ENCODE measurements at regions of chr18 and their contacts with region 1.

Region 1: DNA sequence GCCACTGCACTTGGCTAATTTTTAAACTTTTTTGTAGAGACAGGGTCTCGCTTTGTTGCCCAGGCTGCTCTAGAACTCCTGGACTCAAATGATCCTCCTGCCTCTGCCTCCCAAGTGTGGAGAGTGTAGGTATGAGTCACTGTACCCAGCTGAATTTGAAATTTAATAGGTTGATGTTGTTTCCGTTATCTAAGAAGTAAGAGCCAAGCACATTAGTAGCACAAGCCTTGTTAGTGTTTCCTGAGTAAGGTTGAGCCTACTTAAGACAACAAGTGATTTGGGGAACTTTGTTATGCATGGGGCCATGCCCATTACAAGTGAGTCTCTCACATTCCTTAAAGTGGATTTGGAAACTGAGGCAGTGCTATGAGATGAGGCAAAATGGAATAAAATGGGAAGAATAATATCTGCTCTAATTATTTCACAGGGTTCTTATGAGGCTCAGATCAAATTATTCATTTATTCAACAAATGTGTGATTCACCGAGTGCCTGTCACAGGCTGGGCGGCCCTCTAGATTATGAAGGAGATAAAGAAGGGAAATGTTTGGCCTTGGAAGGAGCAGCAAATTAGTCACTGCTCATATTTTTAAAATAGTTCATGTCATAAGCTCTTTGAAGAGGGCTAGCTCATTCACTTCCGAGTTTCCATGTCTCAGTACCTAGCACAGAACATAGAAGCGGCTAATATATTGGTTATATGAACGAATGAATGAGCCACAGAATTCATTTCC is 217.2 kb downstream of the LDLRAD4 start:
- DNase-seq: peak; percentile 91
- H3K4me3 ChIP-seq: no peak overlapping the region
- H3K27ac ChIP-seq: peak overlapping the region; percentile 90
- H3K4me1 ChIP-seq: peaks cover 35% of the 10 kb centered on the region
- H3K27me3 ChIP-seq: no peaks in the 10 kb centered on the region
- CTCF ChIP-seq: no peak
- POLR2A ChIP-seq: no peak

Region 2: DNA sequence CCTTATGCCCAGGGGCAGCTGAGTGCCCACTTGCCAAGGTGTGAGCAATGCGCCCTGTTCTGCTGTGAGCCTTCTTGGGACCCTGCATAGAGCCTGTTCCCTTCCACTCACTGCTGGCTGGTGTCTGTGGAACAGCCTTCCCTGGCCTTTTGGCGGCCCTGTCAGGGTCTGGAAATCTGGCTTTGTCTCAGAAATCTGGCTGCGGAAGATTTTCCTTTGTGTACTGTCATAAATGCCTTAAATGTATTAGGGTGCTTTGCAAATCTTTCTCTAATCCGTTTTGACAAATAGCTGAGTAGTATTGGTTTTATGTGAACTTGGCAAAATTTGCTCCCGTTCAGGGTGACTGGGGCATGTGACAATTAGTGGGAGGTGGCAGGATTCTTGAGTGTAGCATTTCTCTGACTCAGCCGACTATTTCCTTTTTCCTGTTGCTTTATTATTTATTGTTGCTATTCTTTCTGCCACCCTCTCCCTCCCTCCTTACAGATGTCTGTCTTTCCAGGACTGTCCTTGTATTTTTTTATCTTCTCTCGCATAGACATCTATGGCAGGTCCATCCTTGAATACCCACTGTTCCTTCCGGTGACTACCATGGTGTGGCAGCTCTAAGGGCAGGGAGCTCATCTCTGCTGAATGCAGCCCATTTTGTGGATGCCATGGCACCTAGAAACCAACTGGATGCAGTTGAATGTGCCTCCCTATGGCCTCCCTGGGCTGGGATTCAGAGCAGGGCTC is 175.4 kb before region 1 on chr18:
- CTCF ChIA-PET with region 1: no interaction called
- POLR2A ChIA-PET with region 1: no interaction called
- dilution Hi-C with region 1: no loop called
- intact Hi-C with region 1: loop called (anchors 2 kb)
- DNase-seq: peak; percentile 75
- H3K4me3 ChIP-seq: no peak overlapping the region
- H3K27ac ChIP-seq: peak overlapping the region; percentile 38
- H3K4me1 ChIP-seq: peaks cover 22% of the 10 kb centered on the region
- H3K27me3 ChIP-seq: peaks cover 0 to 5% of the 10 kb centered on the region in 2 experiments
- CTCF ChIP-seq: no peak
- POLR2A ChIP-seq: no peak

Region 3: DNA sequence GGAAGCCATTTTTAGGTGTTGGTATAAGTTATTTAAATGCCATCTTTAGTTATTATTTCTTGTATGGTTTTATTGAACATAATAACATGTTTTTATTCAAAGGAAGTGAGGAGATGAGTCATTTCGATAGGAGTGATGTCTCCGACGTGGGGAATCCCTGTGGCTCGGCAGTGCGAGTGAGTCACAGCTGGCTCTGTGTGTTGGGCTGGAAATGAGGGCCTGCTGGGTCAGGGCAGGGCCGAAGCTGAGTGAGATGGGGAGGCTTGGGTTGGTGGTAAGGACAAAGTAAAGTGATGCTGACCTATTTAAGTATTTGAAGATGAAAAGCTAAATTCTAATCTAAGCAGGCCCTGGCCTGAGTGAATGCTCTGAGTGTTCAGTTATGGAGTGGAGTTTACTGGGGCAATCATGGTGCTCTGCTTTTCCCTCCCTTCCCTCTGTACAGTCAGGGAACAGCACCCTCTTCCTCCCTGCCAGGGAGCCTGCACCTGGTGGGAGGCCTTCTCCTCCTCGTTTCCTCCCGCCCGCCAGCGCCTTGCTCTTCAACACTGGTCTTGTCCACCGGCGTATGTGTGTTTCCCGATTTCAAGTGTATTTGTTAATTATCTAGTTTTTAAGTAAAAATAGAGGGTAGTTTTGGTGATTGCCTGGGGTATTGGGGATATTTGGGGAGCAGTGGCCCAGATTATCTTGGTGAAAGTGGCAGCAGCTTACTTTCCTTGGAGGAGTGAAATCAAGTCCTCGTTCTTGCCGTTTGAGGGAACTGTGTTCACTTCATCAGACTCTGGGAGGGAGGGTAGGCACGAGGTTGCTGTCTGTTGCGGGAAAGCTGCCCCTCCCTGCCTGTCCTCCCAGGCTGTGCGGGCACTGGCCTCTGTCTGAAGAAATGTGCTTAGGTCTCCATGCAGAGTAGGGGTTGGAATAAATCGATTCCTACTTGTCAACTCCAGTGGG is 60.2 kb before region 1 on chr18:
- CTCF ChIA-PET with region 1: interaction called, 6 read pairs
- POLR2A ChIA-PET with region 1: no interaction called
- dilution Hi-C with region 1: no loop called
- intact Hi-C with region 1: loop called (anchors 2 kb)
- DNase-seq: peak; percentile 97
- H3K4me3 ChIP-seq: peak overlapping the region in 1 of 3 experiments; percentile 20
- H3K27ac ChIP-seq: peak overlapping the region; percentile 90
- H3K4me1 ChIP-seq: peaks cover 23% of the 10 kb centered on the region
- H3K27me3 ChIP-seq: no peaks in the 10 kb centered on the region
- CTCF ChIP-seq: no peak
- POLR2A ChIP-seq: no peak

Region 4: DNA sequence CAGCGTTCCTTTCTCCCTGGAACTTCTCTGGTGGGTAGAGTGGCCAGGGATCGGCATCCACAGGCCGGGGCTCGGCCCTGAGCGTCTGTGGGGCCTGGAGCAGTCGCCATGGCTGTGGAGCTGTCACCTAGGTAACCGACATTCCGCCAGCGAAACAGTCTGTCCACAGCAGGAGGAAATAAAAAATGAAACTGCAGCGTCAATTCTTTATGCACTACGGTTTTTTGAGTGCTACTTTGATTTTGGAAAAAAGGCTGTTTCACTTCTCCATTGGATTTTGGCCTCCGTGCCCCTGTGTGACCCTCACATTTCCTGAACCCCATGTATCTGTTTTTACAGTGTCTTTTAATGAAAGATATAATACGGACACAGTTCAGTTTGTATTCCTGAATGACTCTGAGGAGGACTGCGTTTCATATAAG is 53.8 kb before region 1 on chr18:
- CTCF ChIA-PET with region 1: interaction called, 3 read pairs
- POLR2A ChIA-PET with region 1: no interaction called
- dilution Hi-C with region 1: no loop called
- intact Hi-C with region 1: loop called (anchors 1 kb)
- DNase-seq: peak; percentile 71
- H3K4me3 ChIP-seq: peak overlapping the region in 1 of 3 experiments; percentile 49
- H3K27ac ChIP-seq: peak overlapping the region; percentile 94
- H3K4me1 ChIP-seq: peaks cover 31% of the 10 kb centered on the region
- H3K27me3 ChIP-seq: no peaks in the 10 kb centered on the region
- CTCF ChIP-seq: no peak
- POLR2A ChIP-seq: no peak

Region 5: DNA sequence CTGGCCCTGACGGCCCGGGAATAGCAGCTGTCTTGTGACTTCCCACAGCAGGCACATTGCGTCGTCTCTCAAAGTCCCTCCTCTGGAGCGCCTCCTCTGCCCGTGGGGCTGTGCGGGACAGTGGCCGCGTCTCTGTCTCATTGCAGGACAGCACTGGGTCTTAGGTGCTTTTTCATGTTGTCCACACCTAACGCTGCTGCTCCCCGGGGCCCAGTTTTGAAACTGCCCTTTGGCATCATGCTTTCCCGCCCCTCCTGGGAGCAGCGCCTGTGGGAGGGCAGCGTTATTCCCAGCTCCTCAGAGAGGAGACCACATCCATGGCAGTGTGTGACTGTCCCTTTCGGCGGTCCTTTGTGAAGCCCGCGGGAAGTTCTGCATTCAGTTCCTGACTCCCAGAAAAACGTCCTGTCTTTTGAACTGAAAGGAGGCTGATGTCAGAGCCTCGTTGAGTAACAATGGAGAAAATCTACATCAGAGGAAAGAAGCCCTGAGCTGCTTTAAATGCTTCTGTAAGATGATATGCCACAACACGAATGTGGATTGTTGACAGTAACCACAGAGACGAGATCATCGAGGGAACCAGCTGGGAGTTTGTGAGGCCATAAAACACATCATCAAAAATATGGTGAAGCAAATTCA is 64.6 kb after region 1 on chr18:
- CTCF ChIA-PET with region 1: interaction called, 5 read pairs
- POLR2A ChIA-PET with region 1: no interaction called
- dilution Hi-C with region 1: no loop called
- intact Hi-C with region 1: loop called (anchors 2 kb)
- DNase-seq: peak; percentile 83
- H3K4me3 ChIP-seq: no peak overlapping the region
- H3K27ac ChIP-seq: peak overlapping the region; percentile 57
- H3K4me1 ChIP-seq: peaks cover 29% of the 10 kb centered on the region
- H3K27me3 ChIP-seq: peaks cover 0 to 2% of the 10 kb centered on the region in 2 experiments
- CTCF ChIP-seq: no peak
- POLR2A ChIP-seq: no peak

Region 6: GRCh38 chr18:13611601-13612195 is 175.9 kb after region 1 on chr18:
- CTCF ChIA-PET with region 1: no interaction called
- POLR2A ChIA-PET with region 1: no interaction called
- dilution Hi-C with region 1: no loop called
- intact Hi-C with region 1: loop called (anchors 5 kb)
- DNase-seq: peak; percentile 24
- H3K4me3 ChIP-seq: peak overlapping the region in 1 of 3 experiments; percentile 27
- H3K27ac ChIP-seq: no peak overlapping the region
- H3K4me1 ChIP-seq: peaks cover 13% of the 10 kb centered on the region
- H3K27me3 ChIP-seq: peaks cover 15 to 16% of the 10 kb centered on the region in 2 experiments
- CTCF ChIP-seq: no peak
- POLR2A ChIP-seq: no peak

Region 7: DNA sequence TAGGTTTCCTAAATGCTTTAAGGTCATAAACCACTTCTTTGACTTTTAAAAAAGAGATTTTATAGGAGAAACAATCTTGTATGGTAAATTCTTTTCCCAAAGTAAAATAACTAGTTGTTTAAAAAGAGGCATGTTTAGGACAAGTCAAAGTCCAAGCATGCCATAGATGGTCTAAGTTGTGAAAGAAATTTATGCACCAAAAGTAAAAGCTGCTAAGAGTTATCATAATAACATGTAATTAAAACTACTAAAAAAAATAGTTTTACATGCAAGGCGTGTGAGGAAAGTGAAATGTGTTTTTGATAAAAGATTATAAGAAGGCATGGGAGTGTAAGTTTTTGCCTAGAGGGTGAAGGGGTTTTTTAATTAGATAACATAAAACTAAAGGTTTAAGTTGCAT is 268.1 kb after region 1 on chr18:
- CTCF ChIA-PET with region 1: no interaction called
- POLR2A ChIA-PET with region 1: no interaction called
- dilution Hi-C with region 1: no loop called
- intact Hi-C with region 1: no loop called
- DNase-seq: no peak
- H3K4me3 ChIP-seq: no peak overlapping the region
- H3K27ac ChIP-seq: no peak overlapping the region
- H3K4me1 ChIP-seq: no peaks in the 10 kb centered on the region
- H3K27me3 ChIP-seq: no peaks in the 10 kb centered on the region
- CTCF ChIP-seq: no peak
- POLR2A ChIP-seq: no peak

Measured in endothelial cell of umbilical vein (primary cell).